ENCODE measurements at regions of chr19 and their contacts with region 1.

Region 1: DNA sequence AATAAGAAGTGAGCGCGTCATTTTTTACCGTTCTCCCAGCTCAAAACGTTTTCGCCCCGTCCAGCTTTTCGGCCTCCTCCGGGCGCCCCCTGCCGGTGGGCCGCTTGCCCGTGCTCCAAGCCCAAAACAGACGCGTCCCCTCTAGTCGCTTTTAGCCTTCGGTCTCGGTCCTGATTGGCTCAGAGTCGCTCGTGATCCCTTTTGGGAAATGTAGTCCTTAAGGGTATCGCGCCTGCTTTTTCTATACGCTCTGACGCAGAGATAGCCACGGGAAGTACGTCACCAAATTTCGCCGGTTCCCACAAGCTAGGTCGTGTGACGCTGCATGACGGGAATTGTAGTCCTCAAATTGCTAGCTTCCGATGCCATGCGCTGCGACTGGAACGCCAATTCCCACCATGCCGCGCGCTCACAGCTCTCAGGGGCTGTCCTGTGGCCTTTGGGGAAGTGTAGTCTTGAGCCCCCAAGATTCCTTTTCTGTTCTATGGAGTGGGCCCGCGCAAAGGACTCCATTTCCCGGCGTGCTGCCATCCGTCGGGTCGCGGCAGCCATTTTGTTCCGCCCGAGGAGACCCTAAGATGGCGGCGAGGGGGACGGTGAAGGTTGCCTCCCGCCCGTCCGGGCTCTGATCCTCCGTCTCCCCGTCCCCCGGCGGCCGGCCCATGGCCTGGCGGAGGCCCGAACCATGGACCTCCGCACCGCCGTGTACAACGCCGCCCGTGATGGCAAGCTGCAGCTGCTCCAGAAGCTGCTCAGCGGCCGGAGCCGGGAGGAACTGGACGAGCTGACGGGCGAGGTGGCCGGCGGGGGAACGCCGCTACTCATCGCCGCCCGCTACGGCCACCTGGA is at the start of gene FEM1A:
- DNase-seq: peak; percentile 100
- H3K4me3 Mint-ChIP-seq: peak within 1 kb of the TSS; percentile 80
- H3K27ac Mint-ChIP-seq: peak within 1 kb of the TSS; percentile 88
- H3K4me1 Mint-ChIP-seq: peaks cover 39% of the 10 kb centered on the region
- H3K27me3 Mint-ChIP-seq: no peaks in the 10 kb centered on the region
- total RNA-seq, gene FEM1A: 8.1 to 9.1 TPM

Region 2: GRCh38 chr19:4400135-4400936 is 391.1 kb before region 1 on chr19 and contains the start of gene SH3GL1:
- CTCF ChIA-PET with region 1: no interaction called
- intact Hi-C with region 1: loop called (anchors 5 kb)
- DNase-seq: peak; percentile 94
- H3K4me3 Mint-ChIP-seq: peak within 1 kb of the TSS; percentile 94
- H3K27ac Mint-ChIP-seq: peak within 1 kb of the TSS; percentile 93
- H3K4me1 Mint-ChIP-seq: peaks cover 73% of the 10 kb centered on the region
- H3K27me3 Mint-ChIP-seq: no peaks in the 10 kb centered on the region
- total RNA-seq, gene SH3GL1: 31.7 to 32.1 TPM

Region 3: GRCh38 chr19:4557971-4558941 is 233.1 kb before region 1 on chr19:
- CTCF ChIA-PET with region 1: no interaction called
- intact Hi-C with region 1: loop called (anchors 10 kb)
- DNase-seq: peak; percentile 37
- H3K4me3 Mint-ChIP-seq: no peak overlapping the region
- H3K27ac Mint-ChIP-seq: no peak overlapping the region
- H3K4me1 Mint-ChIP-seq: no peaks in the 10 kb centered on the region
- H3K27me3 Mint-ChIP-seq: no peaks in the 10 kb centered on the region

Region 4: GRCh38 chr19:4723367-4724187 is 67.8 kb before region 1 on chr19 and contains the start of gene DPP9:
- CTCF ChIA-PET with region 1: interaction called, 34 read pairs
- intact Hi-C with region 1: loop called (anchors 1 kb)
- DNase-seq: peak; percentile 98
- H3K4me3 Mint-ChIP-seq: peak within 1 kb of the TSS; percentile 91
- H3K27ac Mint-ChIP-seq: peak within 1 kb of the TSS; percentile 97
- H3K4me1 Mint-ChIP-seq: peaks cover 22% of the 10 kb centered on the region
- H3K27me3 Mint-ChIP-seq: peaks cover 3% of the 10 kb centered on the region
- total RNA-seq, gene DPP9: 40.8 to 41.9 TPM

Region 5: DNA sequence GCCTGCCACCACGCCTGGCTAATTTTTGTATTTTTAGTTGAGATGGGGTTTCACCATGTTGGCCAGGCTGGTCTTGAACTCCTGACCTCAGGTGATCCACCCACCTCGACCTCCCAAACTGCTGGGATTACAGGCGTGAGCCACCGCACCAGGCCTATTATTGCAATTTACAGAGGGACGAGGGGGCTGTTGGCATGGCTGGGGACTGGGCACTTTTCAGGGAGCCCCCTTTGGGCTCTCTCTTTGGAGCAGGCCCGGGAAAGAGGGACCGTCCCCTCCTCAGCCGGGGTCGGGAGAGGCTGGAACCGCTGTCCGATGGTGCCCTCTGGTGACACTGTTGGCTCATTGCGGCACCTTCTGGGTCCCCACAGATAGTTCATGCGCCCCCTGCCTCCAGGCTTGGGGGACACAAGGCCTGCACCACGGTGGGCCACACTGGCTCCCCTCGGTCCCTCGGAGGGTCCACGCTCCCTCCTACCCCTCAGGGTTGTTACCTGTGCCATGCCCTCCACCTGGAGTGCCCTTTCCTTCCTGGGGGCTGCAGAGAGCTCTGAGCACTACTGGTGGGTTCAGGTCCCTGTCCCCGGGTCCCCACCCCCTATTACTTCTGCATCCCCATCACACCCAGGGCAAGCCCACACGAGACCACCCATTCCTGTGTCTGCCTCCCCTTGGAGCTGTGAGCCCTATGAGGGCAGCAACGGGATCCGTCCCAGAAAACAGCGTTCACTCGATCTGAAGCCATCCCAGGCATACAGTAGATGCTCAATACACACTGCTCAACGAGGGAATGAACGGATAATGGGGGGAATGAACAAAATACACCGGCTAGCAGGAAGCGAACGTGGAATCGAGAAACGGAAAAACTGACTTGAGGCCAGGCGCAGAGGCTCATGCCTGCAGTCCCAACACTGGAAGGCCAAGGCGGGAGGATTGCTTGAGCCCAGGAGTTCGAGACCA is 12.6 kb after region 1 on chr19:
- CTCF ChIA-PET with region 1: interaction called, 13 read pairs
- intact Hi-C with region 1: no loop called
- DNase-seq: peak; percentile 72
- H3K4me3 Mint-ChIP-seq: peak overlapping the region; percentile 24
- H3K27ac Mint-ChIP-seq: no peak overlapping the region
- H3K4me1 Mint-ChIP-seq: peaks cover 2% of the 10 kb centered on the region
- H3K27me3 Mint-ChIP-seq: no peaks in the 10 kb centered on the region